Activated CD8-positive, alpha-beta memory T cell treated with anti-CD3 and anti-CD28 coated beads, Interleukin-2, amount 10 ng/mL, durations not matched to agents 7 days and 5 days (primary cell): ENCODE measurements at regions of chr1 and their contacts with region 1.

Region 1: DNA sequence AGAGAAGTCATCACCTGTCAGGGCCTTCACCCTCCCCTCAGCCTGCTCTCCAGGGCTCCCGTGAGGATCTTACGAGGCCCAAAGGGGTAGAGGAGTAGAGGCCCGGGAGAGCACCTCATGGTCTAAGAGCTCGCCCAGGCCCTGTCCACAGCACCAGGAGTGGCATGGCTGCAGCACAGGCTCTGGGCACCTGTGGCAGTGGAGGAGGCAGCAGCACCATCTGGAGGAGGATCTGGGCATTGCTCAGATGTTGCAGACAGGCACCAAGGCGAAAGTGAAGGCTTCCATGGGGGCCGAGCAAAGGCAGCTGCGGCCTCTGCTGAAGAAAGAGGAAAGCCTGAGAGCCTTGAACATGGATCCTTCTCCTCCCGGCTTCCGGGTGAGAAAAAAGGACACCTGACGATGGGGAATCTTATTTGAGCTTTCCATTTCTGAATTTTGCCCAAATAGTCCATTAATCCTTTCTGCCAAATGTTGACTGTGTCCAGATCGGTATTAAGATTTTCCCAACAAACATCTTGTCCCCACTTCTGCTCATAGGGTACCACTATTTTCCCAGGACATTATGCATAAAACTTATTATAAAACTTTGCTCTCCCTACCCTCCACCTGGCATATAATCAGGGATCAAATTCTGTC is 604.7 kb downstream of the PTPRC start:
- DNase-seq: peak; percentile 88
- ATAC-seq: peak; percentile 99
- H3K4me3 Mint-ChIP-seq: no peak overlapping the region
- H3K27ac Mint-ChIP-seq: no peak overlapping the region
- H3K4me1 Mint-ChIP-seq: peaks cover 16% of the 10 kb centered on the region
- H3K27me3 Mint-ChIP-seq: peaks cover 11% of the 10 kb centered on the region

Region 2: GRCh38 chr1:198771563-198772153 is 471.9 kb before region 1 on chr1:
- CTCF ChIA-PET with region 1: interaction called, 16 read pairs
- DNase-seq: no peak
- ATAC-seq: no peak
- H3K4me3 Mint-ChIP-seq: no peak overlapping the region
- H3K27ac Mint-ChIP-seq: no peak overlapping the region
- H3K4me1 Mint-ChIP-seq: peaks cover 6% of the 10 kb centered on the region
- H3K27me3 Mint-ChIP-seq: no peaks in the 10 kb centered on the region

Region 3: DNA sequence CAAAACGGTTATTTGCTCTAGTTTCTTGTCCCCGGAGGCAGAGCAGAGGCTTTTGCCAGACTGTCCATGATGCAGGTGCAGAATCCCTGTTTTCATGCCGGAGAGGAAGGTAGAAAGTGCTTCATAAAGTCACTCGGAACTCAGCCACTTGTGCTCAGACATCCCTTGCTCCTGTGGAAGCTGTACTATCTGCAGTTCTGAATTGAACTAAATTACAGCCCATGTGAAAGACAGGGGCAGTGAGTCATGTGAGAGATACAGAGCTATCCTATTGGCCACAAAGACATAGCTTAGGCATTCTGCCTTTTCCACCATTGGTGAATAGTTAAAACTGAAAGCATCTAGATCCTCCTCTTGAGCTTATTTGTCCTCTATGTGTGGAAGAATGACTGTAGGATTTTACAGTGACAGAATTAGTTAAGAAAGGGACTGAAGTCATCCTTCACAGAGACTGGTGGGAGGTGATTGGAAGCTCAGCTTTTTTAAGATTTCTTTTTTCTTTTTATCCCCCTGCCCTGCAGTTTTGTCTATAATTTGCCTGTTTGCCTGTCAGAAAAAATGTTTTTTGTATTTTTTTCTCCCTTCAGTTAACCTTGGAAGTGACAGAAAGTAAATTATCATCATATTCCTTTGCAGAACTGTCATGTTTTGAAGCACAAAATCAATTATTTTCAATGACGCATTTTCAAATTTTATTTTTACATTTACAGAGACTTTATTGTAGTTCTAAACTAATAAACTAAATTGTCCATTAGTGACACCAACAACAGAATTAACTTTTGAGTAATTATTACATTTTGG is 306.1 kb before region 1 on chr1:
- CTCF ChIA-PET with region 1: interaction called, 12 read pairs
- DNase-seq: peak; percentile 75
- ATAC-seq: peak; percentile 94
- H3K4me3 Mint-ChIP-seq: no peak overlapping the region
- H3K27ac Mint-ChIP-seq: peak overlapping the region; percentile 92
- H3K4me1 Mint-ChIP-seq: peaks cover 25% of the 10 kb centered on the region
- H3K27me3 Mint-ChIP-seq: no peaks in the 10 kb centered on the region

Region 4: GRCh38 chr1:199020904-199021303 is 222.6 kb before region 1 on chr1:
- CTCF ChIA-PET with region 1: no interaction called
- DNase-seq: no peak
- ATAC-seq: no peak
- H3K4me3 Mint-ChIP-seq: no peak overlapping the region
- H3K27ac Mint-ChIP-seq: no peak overlapping the region
- H3K4me1 Mint-ChIP-seq: peaks cover 13% of the 10 kb centered on the region
- H3K27me3 Mint-ChIP-seq: no peaks in the 10 kb centered on the region